SK-N-SH (cell line): ENCODE measurements at regions of chr21 and their contacts with region 1.

Region 1: DNA sequence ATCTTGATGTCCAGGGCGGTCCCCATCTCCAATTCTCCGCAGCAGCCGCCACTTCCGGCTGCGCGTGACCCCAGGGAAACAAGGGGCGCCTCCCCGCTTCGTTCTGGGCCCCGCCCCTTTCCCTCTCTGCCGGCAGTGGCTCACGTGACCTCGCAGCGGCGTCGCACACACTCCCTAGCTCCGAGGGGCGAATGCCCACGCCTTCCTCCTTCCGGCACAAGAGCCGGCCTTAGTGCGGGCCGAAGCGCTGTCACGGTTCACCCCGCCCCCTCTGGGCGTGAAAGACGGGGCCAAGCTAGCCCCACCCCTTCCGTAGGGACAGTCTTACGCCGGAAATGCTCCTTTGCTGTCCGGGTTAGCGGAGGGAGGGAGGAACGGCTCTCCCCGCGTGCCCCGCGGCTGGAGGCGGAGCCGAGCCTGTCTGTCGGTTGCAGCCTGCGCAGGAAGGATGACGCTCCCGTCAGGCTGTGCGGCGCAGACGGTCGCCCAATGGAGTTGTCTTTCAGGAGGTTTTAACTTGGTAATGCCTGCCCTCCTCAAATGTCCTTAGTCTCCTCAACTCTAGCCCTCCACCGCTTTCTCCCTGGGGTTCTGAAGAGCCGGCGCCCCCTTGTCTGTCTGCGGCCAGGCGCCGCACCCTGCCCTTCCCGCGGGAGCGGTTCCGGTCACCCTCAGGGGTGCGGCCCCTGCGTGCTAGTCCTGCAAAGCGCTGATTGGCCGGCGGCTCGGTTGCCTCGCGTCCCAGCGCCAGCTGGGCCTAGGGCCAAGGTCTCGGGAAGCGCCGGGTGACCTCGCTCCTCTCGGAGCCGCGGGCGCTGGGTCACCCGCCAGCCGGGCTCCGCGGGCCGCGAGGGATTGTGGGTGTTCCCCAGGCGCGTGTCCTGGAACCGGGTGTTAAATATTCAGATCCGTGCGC is at the start of gene VPS26C:
- DNase-seq: peak; percentile 95
- H3K4me3 ChIP-seq: peak within 1 kb of the TSS; percentile 80 to 92
- H3K27ac ChIP-seq: peak within 1 kb of the TSS; percentile 99 to 100
- H3K4me1 ChIP-seq: peaks cover 0 to 10% of the 10 kb centered on the region in 2 experiments; a peak in 3 of 4 replicates
- H3K27me3 ChIP-seq: no peaks in the 10 kb centered on the region
- CTCF ChIP-seq: no peak
- EP300 ChIP-seq: peak in 1 of 2 experiments; percentile 18; a peak in 1 of 4 replicates
- RAD21 ChIP-seq: no peak; the same call in 1 of the 2 replicates
- polyA plus RNA-seq, gene VPS26C: 34.8 and 42.2 TPM in 2 replicates

Region 2: DNA sequence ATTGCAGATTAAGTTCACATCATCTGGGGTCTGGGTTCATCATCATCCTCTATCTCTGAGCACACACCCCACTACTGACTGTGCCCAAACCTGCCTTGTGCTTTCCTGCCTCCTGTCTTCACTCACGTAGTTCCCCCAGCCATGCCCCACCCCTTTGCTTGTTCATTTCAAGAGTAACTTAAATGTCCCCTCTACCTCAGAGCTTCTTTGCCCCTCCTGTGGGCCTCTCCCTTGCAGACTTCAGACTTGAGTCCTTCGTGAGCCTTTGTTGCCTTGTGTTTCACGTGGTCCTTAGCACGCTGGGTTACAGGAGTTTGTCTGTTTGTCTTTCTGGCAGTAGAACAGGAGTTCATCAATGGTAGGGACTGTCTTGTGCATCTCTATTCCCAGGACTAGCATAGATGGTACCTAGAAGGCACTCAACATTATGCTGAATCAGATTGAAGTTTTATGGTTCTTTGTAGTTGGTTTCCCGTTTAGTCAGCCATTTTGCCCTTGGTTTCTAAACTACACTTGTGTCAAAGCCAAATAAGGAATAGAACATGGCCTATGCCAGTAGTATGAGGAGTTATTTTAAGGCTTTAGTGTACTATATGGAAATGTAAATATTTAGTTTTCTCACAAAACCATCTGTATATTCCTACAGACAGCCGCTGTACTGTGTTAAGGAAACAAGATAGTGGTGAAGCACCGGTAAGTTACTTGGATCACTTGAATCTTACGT is 108.3 kb before region 1 on chr21:
- CTCF ChIA-PET with region 1: no interaction called
- POLR2A ChIA-PET with region 1: no interaction called
- DNase-seq: no peak
- H3K4me3 ChIP-seq: no peak overlapping the region
- H3K27ac ChIP-seq: no peak overlapping the region; a peak in 1 of 4 replicates
- H3K4me1 ChIP-seq: no peaks in the 10 kb centered on the region
- H3K27me3 ChIP-seq: no peaks in the 10 kb centered on the region
- CTCF ChIP-seq: no peak
- EP300 ChIP-seq: no peak
- RAD21 ChIP-seq: no peak

Region 3: GRCh38 chr21:37338671-37339551 is 71.4 kb after region 1 on chr21:
- CTCF ChIA-PET with region 1: no interaction called
- POLR2A ChIA-PET with region 1: interaction called, 10 read pairs
- DNase-seq: peak; percentile 54
- H3K4me3 ChIP-seq: peak overlapping the region; percentile 21 to 28; a peak in 2 of 4 replicates
- H3K27ac ChIP-seq: peak overlapping the region; percentile 87 to 92
- H3K4me1 ChIP-seq: peaks cover 30% of the 10 kb centered on the region in 2 experiments
- H3K27me3 ChIP-seq: no peaks in the 10 kb centered on the region
- CTCF ChIP-seq: no peak
- EP300 ChIP-seq: peak; percentile 41 to 59; a peak in 3 of 4 replicates
- RAD21 ChIP-seq: no peak; the same call in 1 of the 2 replicates

Region 4: DNA sequence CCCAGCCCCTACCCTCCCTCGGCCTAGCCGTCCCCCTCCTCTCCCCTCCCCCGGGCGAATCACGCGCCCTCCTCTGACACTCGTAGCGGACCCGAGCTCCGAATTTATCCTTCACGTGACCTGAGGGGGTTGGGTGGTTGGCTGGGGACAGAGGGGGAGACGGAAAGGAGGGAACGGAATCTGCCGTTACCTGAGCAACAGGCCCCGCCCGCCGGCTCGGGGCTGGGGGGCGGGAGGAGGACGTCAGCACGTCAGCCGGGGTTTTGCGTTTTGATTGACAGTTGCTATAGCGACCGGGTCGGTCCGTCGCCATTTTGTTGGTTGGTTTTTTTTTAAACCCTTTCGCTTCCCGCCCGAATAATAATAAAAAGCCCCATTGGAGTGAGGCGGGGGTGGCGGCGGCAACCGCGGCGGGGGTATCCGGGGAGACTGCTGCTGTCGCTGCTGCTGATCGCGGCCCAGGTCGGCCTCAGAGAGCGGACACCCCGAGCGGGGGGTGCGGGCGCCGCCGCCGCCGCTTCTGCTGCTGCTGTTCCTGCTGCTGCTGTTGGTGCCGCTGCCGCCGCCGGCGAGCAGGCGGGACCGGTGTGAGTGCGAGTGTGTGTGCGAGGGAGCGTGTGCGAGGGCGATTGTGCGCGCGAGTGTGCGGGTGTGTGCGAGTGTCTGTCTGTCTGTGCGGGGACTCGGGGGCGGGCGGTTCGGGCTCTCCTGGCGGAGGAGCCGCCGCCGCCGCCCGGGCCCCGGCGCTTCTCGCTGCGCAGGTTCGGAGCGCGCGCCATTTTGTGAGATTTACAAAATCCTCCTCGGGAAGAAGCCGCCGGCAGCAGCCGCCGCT is 99.2 kb after region 1 on chr21 and contains the start of gene DYRK1A:
- CTCF ChIA-PET with region 1: no interaction called
- POLR2A ChIA-PET with region 1: interaction called, 20 read pairs
- DNase-seq: peak; percentile 97
- H3K4me3 ChIP-seq: peak within 1 kb of the TSS; percentile 90 to 92
- H3K27ac ChIP-seq: peak within 1 kb of the TSS; percentile 98
- H3K4me1 ChIP-seq: peaks cover 24% of the 10 kb centered on the region in 2 experiments; a peak in 3 of 4 replicates
- H3K27me3 ChIP-seq: no peaks in the 10 kb centered on the region
- CTCF ChIP-seq: 0 out of 2 replicates have a peak, but pooled peaks have one; percentile 9
- EP300 ChIP-seq: no peak; a peak in 1 of 4 replicates
- RAD21 ChIP-seq: no peak
- polyA plus RNA-seq, gene DYRK1A: 19.3 and 21.5 TPM in 2 replicates